ENCODE measurements at regions of chr20 and their contacts with region 1.

Region 1: GRCh38 chr20:36481381-36482043 is 59.8 kb upstream of the MYL9 start:
- DNase-seq: no peak
- H3K4me3 ChIP-seq: no peak overlapping the region
- H3K27ac ChIP-seq: no peak overlapping the region
- H3K4me1 ChIP-seq: no peaks in the 10 kb centered on the region
- H3K27me3 ChIP-seq: no peaks in the 10 kb centered on the region
- CTCF ChIP-seq: peak in 1 of 3 experiments; percentile 34; a peak in 1 of 4 replicates
- EP300 ChIP-seq: no peak
- POLR2A ChIP-seq: no peak
- RAD21 ChIP-seq: no peak

Region 2: GRCh38 chr20:36461600-36462439 is 19.7 kb before region 1 on chr20:
- CTCF ChIA-PET with region 1: interaction called, 28 read pairs
- POLR2A ChIA-PET with region 1: interaction called, 5 read pairs
- DNase-seq: peak in 1 of 2 experiments; percentile 62
- H3K4me3 ChIP-seq: peak overlapping the region; percentile 75 to 99 (median 88)
- H3K27ac ChIP-seq: no peak overlapping the region; the same call in 1 of the 2 replicates
- H3K4me1 ChIP-seq: peaks cover 11 to 33% (median 19%) of the 10 kb centered on the region in 4 experiments
- H3K27me3 ChIP-seq: no peaks in the 10 kb centered on the region; a peak in 1 of 7 replicates
- CTCF ChIP-seq: no peak
- EP300 ChIP-seq: no peak
- POLR2A ChIP-seq: no peak; a peak in 2 of 3 replicates
- RAD21 ChIP-seq: no peak

Region 3: DNA sequence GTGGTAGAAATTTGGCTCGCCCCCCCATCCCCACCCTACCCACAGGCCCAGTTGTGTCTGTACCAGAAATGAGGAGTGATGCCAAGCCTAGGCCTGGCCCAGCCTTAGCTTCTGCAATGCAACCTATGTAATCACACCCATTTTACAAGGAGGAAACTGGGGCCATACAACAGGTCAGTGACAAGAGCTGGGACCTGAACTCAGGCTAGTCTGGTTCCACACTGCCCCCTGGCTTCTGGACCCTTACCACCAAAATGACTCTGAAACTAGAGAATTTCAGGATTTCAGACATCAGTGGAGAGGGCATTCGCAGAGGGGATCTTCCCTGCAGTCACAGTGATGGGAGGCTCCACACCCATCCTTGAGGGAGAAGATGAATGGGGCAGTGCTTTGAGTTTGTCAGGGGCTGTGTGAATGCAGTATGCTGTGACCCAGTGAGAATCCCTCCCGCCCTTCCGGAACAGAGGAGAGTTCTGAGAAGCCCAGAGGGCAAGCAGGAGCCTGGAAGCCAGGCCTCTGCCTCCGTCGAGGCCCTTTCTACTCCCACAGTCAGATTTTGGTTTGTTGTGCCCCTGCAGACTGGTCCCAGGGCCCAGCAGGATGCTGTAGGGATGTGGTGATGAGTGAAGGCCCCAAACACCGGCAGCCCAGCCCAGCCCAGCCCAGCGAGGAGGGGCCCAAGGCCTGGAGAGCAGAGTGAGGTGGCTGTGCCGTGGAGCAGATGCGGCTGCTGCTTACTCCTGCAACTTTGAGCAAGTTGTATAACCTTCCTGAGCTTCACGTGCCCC is 11.7 kb after region 1 on chr20:
- CTCF ChIA-PET with region 1: interaction called, 26 read pairs
- POLR2A ChIA-PET with region 1: interaction called, 4 read pairs
- DNase-seq: peak in 1 of 2 experiments; percentile 67
- H3K4me3 ChIP-seq: no peak overlapping the region
- H3K27ac ChIP-seq: no peak overlapping the region
- H3K4me1 ChIP-seq: peaks cover 0 to 3% (median 0%) of the 10 kb centered on the region in 4 experiments; a peak in 2 of 7 replicates
- H3K27me3 ChIP-seq: no peaks in the 10 kb centered on the region; a peak in 1 of 7 replicates
- CTCF ChIP-seq: peak; percentile 59 to 79 (median 75)
- EP300 ChIP-seq: no peak
- POLR2A ChIP-seq: no peak
- RAD21 ChIP-seq: peak; percentile 68 to 77